ENCODE measurements at regions of chr1 and their contacts with region 1.

Region 1: GRCh38 chr1:85200870-85201339 is at the start of gene SYDE2:
- DNase-seq: peak; percentile 84 to 89 (median 86)
- H3K4me3 ChIP-seq: peak within 1 kb of the TSS; percentile 72 to 73
- H3K4me3 Mint-ChIP-seq: peak within 1 kb of the TSS; percentile 96 to 99 (median 98)
- H3K27ac ChIP-seq: peak within 1 kb of the TSS; percentile 82
- H3K27ac Mint-ChIP-seq: peak within 1 kb of the TSS; percentile 97 to 99 (median 98)
- H3K4me1 ChIP-seq: peaks cover 27% of the 10 kb centered on the region
- H3K4me1 Mint-ChIP-seq: peaks cover 18 to 37% (median 27%) of the 10 kb centered on the region in 4 donors
- H3K27me3 ChIP-seq: no peaks in the 10 kb centered on the region
- H3K27me3 Mint-ChIP-seq: peaks cover 2 to 3% of the 10 kb centered on the region in 2 donors
- total RNA-seq, gene SYDE2: 5.0 to 5.2 TPM

Region 2: DNA sequence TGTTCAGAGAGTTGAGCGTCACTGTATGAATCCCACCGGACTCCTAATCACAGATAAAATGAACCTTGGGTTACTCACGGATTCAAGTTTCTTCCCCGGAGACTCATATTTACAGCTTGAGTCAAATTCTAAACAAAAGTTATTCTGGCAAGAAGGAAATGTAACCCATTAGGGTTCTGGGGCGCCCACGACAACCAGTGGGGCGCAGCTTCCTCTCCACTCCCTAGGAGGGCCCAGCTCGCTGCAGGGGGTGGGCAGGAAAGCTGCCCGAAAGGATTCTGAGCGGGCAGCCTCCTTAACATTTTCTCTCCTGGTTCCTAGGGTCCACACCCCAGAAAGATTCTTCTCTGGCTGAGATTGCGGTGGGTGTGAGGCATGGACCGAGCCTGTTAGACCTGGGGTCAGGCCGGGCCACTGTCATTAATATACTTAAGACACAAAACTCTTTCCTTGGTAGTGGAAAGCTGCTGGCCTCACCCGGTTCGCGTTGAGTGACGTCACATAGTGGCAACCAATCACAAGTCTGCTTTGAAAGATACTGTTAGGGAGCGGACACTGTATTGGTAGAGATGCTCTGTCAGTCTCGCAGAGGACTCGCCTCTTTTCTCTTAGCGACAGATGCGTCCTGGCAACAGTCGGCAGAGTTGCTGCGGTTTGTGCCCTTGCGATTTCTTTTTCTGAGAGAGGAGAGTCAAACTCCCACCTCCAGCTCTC is 139.0 kb before region 1 on chr1:
- CTCF ChIA-PET with region 1: no interaction called
- POLR2A ChIA-PET with region 1: no interaction called
- intact Hi-C with region 1: loop called (anchors 1 kb)
- DNase-seq: peak; percentile 85 to 92 (median 88)
- H3K4me3 ChIP-seq: peak overlapping the region in 1 of 2 donors; percentile 41
- H3K4me3 Mint-ChIP-seq: peak overlapping the region; percentile 82 to 96 (median 88)
- H3K27ac ChIP-seq: no peak overlapping the region
- H3K27ac Mint-ChIP-seq: peak overlapping the region; percentile 55 to 96 (median 95)
- H3K4me1 ChIP-seq: peaks cover 10% of the 10 kb centered on the region
- H3K4me1 Mint-ChIP-seq: peaks cover 10 to 14% (median 12%) of the 10 kb centered on the region in 4 donors
- H3K27me3 ChIP-seq: no peaks in the 10 kb centered on the region
- H3K27me3 Mint-ChIP-seq: peaks cover 9 to 13% of the 10 kb centered on the region in 2 donors

Region 3: DNA sequence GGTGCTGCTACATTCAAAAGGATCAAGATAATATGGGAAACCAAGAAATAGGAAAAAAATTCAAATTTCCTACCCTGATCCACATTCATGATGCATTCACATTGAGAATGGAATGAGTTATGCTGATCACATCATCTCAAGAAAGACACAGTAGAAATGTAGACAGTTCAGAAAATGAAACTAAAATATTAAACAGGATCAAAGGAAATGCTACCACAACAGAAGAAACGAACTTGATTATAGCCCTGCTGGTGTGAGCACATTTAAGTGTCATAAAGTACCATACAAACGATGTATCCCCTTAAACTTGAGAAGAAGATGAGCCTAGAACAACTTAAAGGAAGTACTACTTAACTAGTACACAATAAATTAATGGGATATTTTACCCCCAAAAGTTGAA is 21.4 kb before region 1 on chr1:
- CTCF ChIA-PET with region 1: no interaction called
- POLR2A ChIA-PET with region 1: interaction called, 11 read pairs
- intact Hi-C with region 1: loop called (anchors 1 kb)
- DNase-seq: peak in 4 of 5 donors; percentile 41 to 61 (median 52)
- H3K4me3 ChIP-seq: no peak overlapping the region
- H3K4me3 Mint-ChIP-seq: peak overlapping the region; percentile 53 to 88 (median 72)
- H3K27ac ChIP-seq: no peak overlapping the region
- H3K27ac Mint-ChIP-seq: peak overlapping the region in 5 of 7 donors; percentile 21 to 90 (median 48)
- H3K4me1 ChIP-seq: peaks cover 14% of the 10 kb centered on the region
- H3K4me1 Mint-ChIP-seq: peaks cover 7 to 14% (median 13%) of the 10 kb centered on the region in 4 donors
- H3K27me3 ChIP-seq: no peaks in the 10 kb centered on the region
- H3K27me3 Mint-ChIP-seq: no peaks in the 10 kb centered on the region

Region 4: GRCh38 chr1:85259118-85259911 is 58.4 kb after region 1 on chr1 and contains the start of gene C1orf52:
- CTCF ChIA-PET with region 1: interaction called, 9 read pairs
- POLR2A ChIA-PET with region 1: interaction called, 21 read pairs
- intact Hi-C with region 1: loop called (anchors 1 kb)
- DNase-seq: peak; percentile 93 to 96 (median 95)
- H3K4me3 ChIP-seq: peak within 1 kb of the TSS; percentile 85 to 95
- H3K4me3 Mint-ChIP-seq: peak within 1 kb of the TSS; percentile 98 to 99 (median 98)
- H3K27ac ChIP-seq: peak within 1 kb of the TSS; percentile 80
- H3K27ac Mint-ChIP-seq: peak within 1 kb of the TSS; percentile 94 to 98 (median 97)
- H3K4me1 ChIP-seq: peaks cover 35% of the 10 kb centered on the region
- H3K4me1 Mint-ChIP-seq: peaks cover 27 to 56% (median 41%) of the 10 kb centered on the region in 4 donors
- H3K27me3 ChIP-seq: no peaks in the 10 kb centered on the region
- H3K27me3 Mint-ChIP-seq: no peaks in the 10 kb centered on the region
- total RNA-seq, gene C1orf52: 39.6 to 41.6 TPM